ENCODE measurements at regions of chr2 and their contacts with region 1.

Region 1: GRCh38 chr2:131093006-131093695 is at the start of gene FAM168B:
- DNase-seq: peak; percentile 57 to 93
- H3K4me3 ChIP-seq: peak within 1 kb of the TSS; percentile 79 to 94 (median 87)
- H3K27ac ChIP-seq: peak within 1 kb of the TSS; percentile 99
- H3K4me1 ChIP-seq: no peaks in the 10 kb centered on the region
- H3K27me3 ChIP-seq: no peaks in the 10 kb centered on the region
- CTCF ChIP-seq: 0 out of 4 replicates have a peak, but pooled peaks of 1 of the 3 experiments have one; percentile 0
- EP300 ChIP-seq: peak in 1 of 2 experiments; percentile 3; a peak in 1 of 3 replicates
- POLR2A ChIP-seq: peak; percentile 95 to 97
- RAD21 ChIP-seq: no peak
- total RNA-seq, gene FAM168B: 58.1 and 61.9 TPM in 2 replicates

Region 2: DNA sequence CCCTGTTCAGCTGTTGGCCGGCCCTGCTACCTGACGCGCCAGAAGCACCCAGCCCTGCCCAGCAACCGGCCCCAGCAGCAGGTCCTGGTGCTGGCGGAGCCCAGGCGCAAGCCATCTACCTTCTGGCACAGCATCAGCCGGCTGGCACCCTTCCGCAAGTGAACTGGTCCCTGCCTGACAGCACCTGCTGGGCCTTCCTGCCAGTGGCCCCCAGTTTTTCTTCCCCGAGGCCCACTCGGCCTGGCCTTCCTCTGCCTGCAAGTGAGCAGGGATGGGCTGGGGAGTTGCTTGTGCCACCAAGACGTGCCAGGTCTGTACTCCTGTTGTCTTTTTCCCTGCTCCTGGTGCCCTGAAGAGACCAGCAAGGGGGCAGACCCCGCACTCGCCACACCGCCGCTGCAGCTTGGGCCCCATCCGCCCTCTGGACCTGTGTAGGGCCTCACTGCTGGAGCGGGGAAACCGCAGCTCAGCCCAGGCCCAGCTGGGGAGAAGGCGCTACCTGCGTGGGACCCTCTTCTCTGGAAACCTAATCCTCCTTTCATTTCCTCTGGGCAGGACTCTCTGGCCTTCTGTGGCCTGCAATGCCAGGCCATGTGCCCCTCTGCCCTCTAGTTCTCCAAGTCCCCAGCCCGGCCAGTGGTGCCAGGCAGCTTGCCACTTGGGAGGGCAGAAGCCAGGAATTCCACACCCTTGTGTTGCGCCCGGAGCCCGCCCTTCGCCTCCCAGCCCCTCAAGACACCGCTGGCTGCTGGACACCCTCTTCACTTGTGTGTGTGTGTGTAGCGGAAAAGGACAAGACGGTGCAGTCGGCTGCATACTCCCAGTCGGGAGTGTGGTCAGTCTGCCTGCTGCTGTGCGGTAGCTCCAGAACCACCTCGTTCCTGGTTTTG is 46.9 kb before region 1 on chr2:
- CTCF ChIA-PET with region 1: no interaction called
- POLR2A ChIA-PET with region 1: interaction called, 13 read pairs
- DNase-seq: no peak
- H3K4me3 ChIP-seq: no peak overlapping the region
- H3K27ac ChIP-seq: no peak overlapping the region
- H3K4me1 ChIP-seq: peaks cover 0 to 5% (median 0%) of the 10 kb centered on the region in 4 experiments; a peak in 3 of 7 replicates
- H3K27me3 ChIP-seq: no peaks in the 10 kb centered on the region
- CTCF ChIP-seq: no peak
- EP300 ChIP-seq: no peak
- POLR2A ChIP-seq: no peak
- RAD21 ChIP-seq: no peak

Region 3: DNA sequence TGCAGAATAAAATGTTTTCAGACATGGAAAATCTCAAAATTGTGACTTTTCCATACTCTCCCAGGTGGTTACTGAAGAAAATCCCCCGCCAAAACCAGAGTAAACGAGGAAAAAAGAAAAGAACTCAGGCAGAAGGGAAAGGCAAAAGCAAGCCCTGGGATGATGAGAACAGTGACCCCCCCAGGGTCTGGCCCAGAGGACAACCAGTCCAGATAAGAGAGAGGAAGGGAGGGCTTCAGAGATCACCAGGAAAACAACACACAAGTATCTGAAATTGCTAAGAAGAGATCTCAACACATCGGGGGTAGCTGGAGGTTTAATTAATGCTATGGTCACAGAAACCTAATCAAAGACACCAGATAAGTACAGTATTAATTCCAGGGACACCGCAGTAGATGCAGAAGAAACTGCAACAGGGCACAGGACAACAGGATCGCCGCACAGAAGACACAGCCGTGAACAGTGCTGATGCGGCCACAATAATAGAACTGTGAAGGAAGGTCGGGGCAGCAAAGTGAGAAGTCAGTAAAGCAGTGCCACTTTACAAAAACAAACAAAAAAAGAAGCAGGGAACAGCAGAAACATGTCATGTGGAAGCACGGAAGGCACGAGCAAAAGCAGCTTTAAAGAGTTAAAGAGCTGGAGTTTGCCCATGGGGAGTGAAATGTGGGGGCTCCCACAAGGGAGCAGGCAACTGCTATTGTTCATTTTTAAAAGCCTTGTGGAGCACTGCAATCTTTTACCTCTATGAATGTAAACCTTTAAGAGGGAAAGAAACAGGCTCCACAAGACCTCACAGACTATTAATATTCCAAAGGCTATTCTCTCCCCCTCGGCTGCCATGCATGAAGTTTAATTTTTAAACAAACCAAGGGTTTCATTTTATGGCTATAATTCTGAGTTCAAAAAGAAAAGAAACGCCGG is 28.3 kb before region 1 on chr2:
- CTCF ChIA-PET with region 1: no interaction called
- POLR2A ChIA-PET with region 1: interaction called, 13 read pairs
- DNase-seq: no peak
- H3K4me3 ChIP-seq: no peak overlapping the region
- H3K27ac ChIP-seq: no peak overlapping the region
- H3K4me1 ChIP-seq: 0 out of 7 replicates have a peak, but pooled peaks cover 0 to 2% (median 0%) of the 10 kb centered on the region in 4 experiments
- H3K27me3 ChIP-seq: no peaks in the 10 kb centered on the region
- CTCF ChIP-seq: no peak
- EP300 ChIP-seq: no peak
- POLR2A ChIP-seq: no peak
- RAD21 ChIP-seq: no peak

Region 4: GRCh38 chr2:131076707-131077106 is 16.4 kb before region 1 on chr2:
- CTCF ChIA-PET with region 1: interaction called, 4 read pairs
- POLR2A ChIA-PET with region 1: interaction called, 34 read pairs
- DNase-seq: no peak
- H3K4me3 ChIP-seq: no peak overlapping the region
- H3K27ac ChIP-seq: no peak overlapping the region; the same call in 1 of the 2 replicates
- H3K4me1 ChIP-seq: peaks cover 0 to 4% (median 2%) of the 10 kb centered on the region in 4 experiments; a peak in 3 of 7 replicates
- H3K27me3 ChIP-seq: no peaks in the 10 kb centered on the region
- CTCF ChIP-seq: no peak
- EP300 ChIP-seq: no peak
- POLR2A ChIP-seq: no peak
- RAD21 ChIP-seq: no peak

Region 5: GRCh38 chr2:131105156-131105949 is 12.2 kb after region 1 on chr2 and contains the start of gene PLEKHB2:
- CTCF ChIA-PET with region 1: interaction called, 8 read pairs
- POLR2A ChIA-PET with region 1: interaction called, 60 read pairs
- DNase-seq: peak; percentile 68 to 98
- H3K4me3 ChIP-seq: peak within 1 kb of the TSS; percentile 58 to 93 (median 84)
- H3K27ac ChIP-seq: peak within 1 kb of the TSS; percentile 76
- H3K4me1 ChIP-seq: peaks cover 5 to 11% (median 8%) of the 10 kb centered on the region in 4 experiments; a peak in 5 of 7 replicates
- H3K27me3 ChIP-seq: no peaks in the 10 kb centered on the region
- CTCF ChIP-seq: no peak
- EP300 ChIP-seq: no peak; a peak in 1 of 3 replicates
- POLR2A ChIP-seq: peak; percentile 25 to 91
- RAD21 ChIP-seq: 0 out of 4 replicates have a peak, but pooled peaks of 1 of the 2 experiments have one; percentile 1
- total RNA-seq, gene PLEKHB2: 52.8 and 54.8 TPM in 2 replicates